PC-3 (cell line): ENCODE measurements at regions of chr9 and their contacts with region 1.

Region 1: GRCh38 chr9:73183917-73184861 is 32.5 kb downstream of the ANXA1 start:
- DNase-seq: peak; percentile 60
- ATAC-seq: no peak
- H3K4me3 ChIP-seq: no peak overlapping the region
- H3K27ac ChIP-seq: no peak overlapping the region
- H3K4me1 ChIP-seq: peaks cover 16% of the 10 kb centered on the region
- H3K27me3 ChIP-seq: peaks cover 4% of the 10 kb centered on the region; the same call in 1 of the 2 replicates
- CTCF ChIP-seq: peak; percentile 45

Region 2: DNA sequence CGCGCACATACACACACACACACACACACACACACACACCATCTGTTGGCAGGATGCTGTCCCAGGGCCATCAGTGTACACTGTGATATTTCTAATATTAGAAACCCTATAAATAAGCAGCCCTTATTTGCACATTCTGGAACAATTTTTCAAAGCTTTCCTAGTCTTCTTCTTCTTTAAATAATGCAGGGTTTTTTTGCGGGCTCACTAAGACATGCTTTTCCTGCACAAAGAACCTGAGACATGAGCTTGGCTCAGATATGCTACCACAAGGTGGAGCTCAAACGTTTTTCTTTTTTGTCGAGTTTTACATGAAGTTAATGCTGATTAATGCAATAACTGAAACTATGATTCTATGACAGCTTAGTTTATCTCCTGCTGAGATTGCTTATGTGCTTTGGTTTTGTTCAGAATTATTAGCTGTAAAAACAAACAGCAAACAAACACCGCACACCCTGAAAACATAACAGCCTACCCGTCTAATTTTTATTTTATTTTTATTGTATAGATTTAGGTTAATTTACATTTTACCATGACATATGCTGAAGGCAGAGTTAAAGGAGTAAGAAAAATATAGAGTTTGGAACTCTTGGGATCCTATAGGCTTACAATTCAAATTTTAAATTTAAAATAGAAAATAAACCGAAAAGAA is 327.1 kb before region 1 on chr9:
- CTCF ChIA-PET with region 1: no interaction called
- POLR2A ChIA-PET with region 1: no interaction called
- intact Hi-C with region 1: loop called (anchors 5 kb)
- DNase-seq: peak; percentile 65
- ATAC-seq: peak; percentile 35; the same call in 1 of the 2 replicates
- H3K4me3 ChIP-seq: no peak overlapping the region
- H3K27ac ChIP-seq: no peak overlapping the region
- H3K4me1 ChIP-seq: no peaks in the 10 kb centered on the region
- H3K27me3 ChIP-seq: no peaks in the 10 kb centered on the region
- CTCF ChIP-seq: peak; percentile 62

Region 3: GRCh38 chr9:73034962-73035361 is 149.2 kb before region 1 on chr9:
- CTCF ChIA-PET with region 1: no interaction called
- POLR2A ChIA-PET with region 1: no interaction called
- intact Hi-C with region 1: loop called (anchors 1 kb)
- DNase-seq: peak; percentile 11
- ATAC-seq: no peak
- H3K4me3 ChIP-seq: no peak overlapping the region
- H3K27ac ChIP-seq: no peak overlapping the region
- H3K4me1 ChIP-seq: no peaks in the 10 kb centered on the region
- H3K27me3 ChIP-seq: peaks cover 83% of the 10 kb centered on the region
- CTCF ChIP-seq: peak; percentile 41; the same call in 1 of the 2 replicates

Region 4: GRCh38 chr9:73081979-73082657 is 102.1 kb before region 1 on chr9:
- CTCF ChIA-PET with region 1: interaction called, 4 read pairs
- POLR2A ChIA-PET with region 1: no interaction called
- intact Hi-C with region 1: loop called (anchors 1 kb)
- DNase-seq: peak; percentile 43
- ATAC-seq: no peak
- H3K4me3 ChIP-seq: no peak overlapping the region
- H3K27ac ChIP-seq: no peak overlapping the region
- H3K4me1 ChIP-seq: peaks cover 15% of the 10 kb centered on the region
- H3K27me3 ChIP-seq: peaks cover 8% of the 10 kb centered on the region; the same call in 1 of the 2 replicates
- CTCF ChIP-seq: peak; percentile 70

Region 5: DNA sequence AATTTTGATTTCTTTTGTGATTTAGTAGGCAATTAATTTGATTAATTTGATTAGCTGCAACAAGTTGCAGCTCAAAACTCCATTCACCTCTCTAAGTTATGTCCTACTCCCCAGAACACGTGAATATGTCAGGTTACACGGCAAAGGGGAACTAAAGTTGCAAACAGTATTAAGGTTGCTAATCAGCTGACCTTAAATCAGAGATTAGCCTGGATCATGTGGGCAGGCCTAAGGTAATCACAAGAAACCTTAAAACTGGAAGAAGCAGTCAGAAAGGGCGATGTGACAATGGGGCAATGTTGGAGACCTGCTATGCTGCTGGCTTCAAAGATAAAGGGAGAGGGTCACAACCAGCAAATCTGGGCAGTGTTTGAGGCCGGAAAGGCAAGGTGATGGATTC is 79.8 kb before region 1 on chr9:
- CTCF ChIA-PET with region 1: interaction called, 7 read pairs
- POLR2A ChIA-PET with region 1: interaction called, 4 read pairs
- intact Hi-C with region 1: loop called (anchors 1 kb)
- DNase-seq: no peak
- ATAC-seq: no peak
- H3K4me3 ChIP-seq: no peak overlapping the region
- H3K27ac ChIP-seq: no peak overlapping the region
- H3K4me1 ChIP-seq: peaks cover 16% of the 10 kb centered on the region
- H3K27me3 ChIP-seq: no peaks in the 10 kb centered on the region
- CTCF ChIP-seq: no peak

Region 6: GRCh38 chr9:73114058-73114457 is 70.1 kb before region 1 on chr9:
- CTCF ChIA-PET with region 1: no interaction called
- POLR2A ChIA-PET with region 1: no interaction called
- intact Hi-C with region 1: loop called (anchors 1 kb)
- DNase-seq: no peak
- ATAC-seq: no peak
- H3K4me3 ChIP-seq: no peak overlapping the region
- H3K27ac ChIP-seq: no peak overlapping the region
- H3K4me1 ChIP-seq: peaks cover 21% of the 10 kb centered on the region
- H3K27me3 ChIP-seq: no peaks in the 10 kb centered on the region
- CTCF ChIP-seq: no peak

Region 7: GRCh38 chr9:73149371-73150067 is 34.7 kb before region 1 on chr9:
- CTCF ChIA-PET with region 1: no interaction called
- POLR2A ChIA-PET with region 1: no interaction called
- intact Hi-C with region 1: loop called (anchors 1 kb)
- DNase-seq: peak; percentile 79
- ATAC-seq: peak; percentile 23
- H3K4me3 ChIP-seq: peak overlapping the region; percentile 52
- H3K27ac ChIP-seq: peak overlapping the region; percentile 90
- H3K4me1 ChIP-seq: peaks cover 63% of the 10 kb centered on the region
- H3K27me3 ChIP-seq: no peaks in the 10 kb centered on the region
- CTCF ChIP-seq: no peak

Region 8: DNA sequence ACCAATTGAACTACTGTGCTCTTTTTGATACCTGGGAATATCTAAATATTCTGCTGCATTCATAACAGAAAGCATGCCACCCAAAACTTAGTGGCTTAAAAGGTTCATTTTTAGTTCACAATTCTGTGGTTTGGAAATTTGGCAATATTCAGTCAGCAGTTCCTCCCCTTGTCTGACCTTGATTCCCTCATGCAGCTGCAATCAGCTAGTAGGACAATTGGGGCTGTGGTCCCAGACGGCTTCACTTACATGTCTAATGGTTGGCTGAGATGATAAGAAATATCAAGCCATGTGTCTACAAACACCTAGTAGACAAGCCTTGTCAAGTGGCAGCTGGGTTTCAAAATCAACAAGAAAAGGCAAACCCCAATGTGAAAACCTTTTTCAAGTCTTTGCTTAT is 18.8 kb after region 1 on chr9:
- CTCF ChIA-PET with region 1: no interaction called
- POLR2A ChIA-PET with region 1: no interaction called
- intact Hi-C with region 1: no loop called
- DNase-seq: no peak
- ATAC-seq: no peak
- H3K4me3 ChIP-seq: no peak overlapping the region
- H3K27ac ChIP-seq: no peak overlapping the region
- H3K4me1 ChIP-seq: no peaks in the 10 kb centered on the region
- H3K27me3 ChIP-seq: peaks cover 9% of the 10 kb centered on the region
- CTCF ChIP-seq: no peak